CD8-positive, alpha-beta T cell (primary cell): ENCODE measurements at regions of chr6 and their contacts with region 1.

Region 1: GRCh38 chr6:116945809-116946208 is 68.8 kb downstream of the RFX6 start:
- DNase-seq: no peak
- ATAC-seq: no peak
- H3K4me3 ChIP-seq: no peak overlapping the region
- H3K4me3 Mint-ChIP-seq: no peak overlapping the region
- H3K27ac ChIP-seq: no peak overlapping the region
- H3K27ac Mint-ChIP-seq: no peak overlapping the region
- H3K4me1 ChIP-seq: no peaks in the 10 kb centered on the region
- H3K4me1 Mint-ChIP-seq: no peaks in the 10 kb centered on the region
- H3K27me3 ChIP-seq: no peaks in the 10 kb centered on the region
- H3K27me3 Mint-ChIP-seq: no peaks in the 10 kb centered on the region
- CTCF ChIP-seq: no peak

Region 2: DNA sequence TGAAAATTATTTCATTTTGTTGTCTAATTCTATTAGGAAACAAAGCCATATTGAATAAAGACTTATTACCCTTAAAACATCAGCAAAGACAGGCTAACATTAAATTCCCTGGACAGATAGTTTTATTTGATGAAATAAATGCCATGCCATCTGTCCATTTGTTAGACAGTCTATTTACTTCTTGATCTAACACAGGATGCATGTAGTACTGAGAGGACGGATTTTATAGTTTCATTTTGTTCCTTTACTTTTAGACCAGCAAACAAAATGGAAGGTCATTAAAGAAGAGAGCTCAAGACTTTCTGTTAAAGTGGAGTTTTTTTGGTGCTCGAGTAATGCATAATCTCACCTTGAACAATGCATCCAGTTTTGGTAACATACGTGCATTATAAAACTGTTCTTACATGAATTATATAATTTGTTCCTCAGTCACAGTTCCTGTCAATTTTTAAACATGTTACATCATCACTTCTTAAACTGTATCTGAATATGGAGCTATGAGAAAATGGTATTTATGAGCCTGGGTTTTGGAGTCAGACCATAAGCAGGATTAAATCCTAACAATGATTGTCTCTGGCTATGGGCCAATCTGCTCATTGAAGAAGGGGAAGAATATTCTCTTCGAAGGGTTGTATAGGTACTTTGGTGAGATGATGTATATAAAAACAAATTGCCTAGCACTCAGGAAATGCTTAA is 22.8 kb before region 1 on chr6:
- CTCF ChIA-PET with region 1: no interaction called
- POLR2A ChIA-PET with region 1: no interaction called
- intact Hi-C with region 1: no loop called
- DNase-seq: no peak
- ATAC-seq: no peak
- H3K4me3 ChIP-seq: no peak overlapping the region
- H3K4me3 Mint-ChIP-seq: no peak overlapping the region
- H3K27ac ChIP-seq: no peak overlapping the region
- H3K27ac Mint-ChIP-seq: no peak overlapping the region
- H3K4me1 ChIP-seq: no peaks in the 10 kb centered on the region
- H3K4me1 Mint-ChIP-seq: no peaks in the 10 kb centered on the region
- H3K27me3 ChIP-seq: no peaks in the 10 kb centered on the region
- H3K27me3 Mint-ChIP-seq: no peaks in the 10 kb centered on the region
- CTCF ChIP-seq: no peak

Region 3: GRCh38 chr6:116996842-116997241 is 51.0 kb after region 1 on chr6:
- CTCF ChIA-PET with region 1: no interaction called
- POLR2A ChIA-PET with region 1: no interaction called
- intact Hi-C with region 1: loop called in 1 of 2 experiments (anchors 1 kb)
- DNase-seq: no peak
- ATAC-seq: no peak
- H3K4me3 ChIP-seq: no peak overlapping the region
- H3K4me3 Mint-ChIP-seq: no peak overlapping the region
- H3K27ac ChIP-seq: no peak overlapping the region
- H3K27ac Mint-ChIP-seq: no peak overlapping the region
- H3K4me1 ChIP-seq: no peaks in the 10 kb centered on the region
- H3K4me1 Mint-ChIP-seq: no peaks in the 10 kb centered on the region
- H3K27me3 ChIP-seq: no peaks in the 10 kb centered on the region
- H3K27me3 Mint-ChIP-seq: no peaks in the 10 kb centered on the region
- CTCF ChIP-seq: no peak